HAP-1 (cell line): ENCODE measurements at regions of chr16 and their contacts with region 1.

Region 1: GRCh38 chr16:22065252-22065651 is 27.1 kb upstream of the VWA3A start:
- DNase-seq: no peak
- H3K4me3 ChIP-seq: no peak overlapping the region
- H3K4me1 ChIP-seq: peaks cover 16% of the 10 kb centered on the region
- H3K27me3 ChIP-seq: no peaks in the 10 kb centered on the region

Region 2: GRCh38 chr16:22007509-22008214 is 57.6 kb before region 1 on chr16 and contains the start of gene MOSMO:
- in situ Hi-C with region 1: loop called (anchors 10 kb)
- DNase-seq: peak; percentile 34 to 72
- H3K4me3 ChIP-seq: peak within 1 kb of the TSS; percentile 84
- H3K4me1 ChIP-seq: peaks cover 6% of the 10 kb centered on the region; the same call in 1 of the 2 replicates
- H3K27me3 ChIP-seq: no peaks in the 10 kb centered on the region

Region 3: GRCh38 chr16:22659933-22660332 is 594.7 kb after region 1 on chr16:
- in situ Hi-C with region 1: no loop called
- DNase-seq: no peak
- H3K4me3 ChIP-seq: no peak overlapping the region
- H3K4me1 ChIP-seq: no peaks in the 10 kb centered on the region
- H3K27me3 ChIP-seq: 0 out of 2 replicates have a peak, but pooled peaks cover 3% of the 10 kb centered on the region